Activated B cell treated with CpG ODN at 0.5 μM for 24 hours (primary cell): ENCODE measurements at regions of chr12 and their contacts with region 1.

Region 1: GRCh38 chr12:116703214-116703795 is 34.6 kb downstream of the SPRING1 start:
- DNase-seq: peak; percentile 42
- ATAC-seq: peak; percentile 66
- H3K4me3 Mint-ChIP-seq: no peak overlapping the region
- H3K27ac Mint-ChIP-seq: no peak overlapping the region
- H3K4me1 Mint-ChIP-seq: peaks cover 11% of the 10 kb centered on the region
- H3K27me3 Mint-ChIP-seq: peaks cover 4% of the 10 kb centered on the region
- CTCF ChIP-seq: peak; percentile 65

Region 2: DNA sequence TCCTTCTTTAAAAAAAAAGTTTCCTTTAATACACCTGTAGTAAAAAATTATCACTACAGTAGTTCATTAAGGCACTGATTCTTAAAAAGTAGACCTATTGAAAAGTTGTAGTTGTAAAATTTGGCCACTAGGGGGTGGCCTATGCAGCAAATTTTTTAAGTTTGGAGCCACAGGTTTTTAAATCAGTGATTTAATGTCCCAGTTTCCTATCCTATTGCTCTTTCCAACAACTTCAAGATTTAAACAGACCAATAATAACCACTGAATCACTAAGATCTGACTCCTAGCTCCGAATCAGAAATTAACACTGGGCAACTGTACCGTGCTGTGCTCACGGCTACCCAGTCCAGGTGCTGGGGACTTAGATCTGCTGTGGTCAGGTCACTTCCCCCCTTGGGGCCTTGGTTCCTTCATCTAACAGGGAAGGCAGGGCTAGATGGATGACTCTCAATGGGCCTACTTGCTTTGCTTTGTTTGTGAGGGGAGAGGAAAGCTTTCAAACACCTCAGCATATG is 705.1 kb before region 1 on chr12:
- CTCF ChIA-PET with region 1: interaction called, 45 read pairs
- POLR2A ChIA-PET with region 1: no interaction called
- intact Hi-C with region 1: no loop called
- DNase-seq: no peak
- ATAC-seq: peak; percentile 90
- H3K4me3 Mint-ChIP-seq: no peak overlapping the region
- H3K27ac Mint-ChIP-seq: peak overlapping the region; percentile 78
- H3K4me1 Mint-ChIP-seq: peaks cover 10% of the 10 kb centered on the region
- H3K27me3 Mint-ChIP-seq: no peaks in the 10 kb centered on the region
- CTCF ChIP-seq: peak; percentile 57

Region 3: GRCh38 chr12:116880817-116881324 is 177.6 kb after region 1 on chr12:
- CTCF ChIA-PET with region 1: interaction called, 26 read pairs
- POLR2A ChIA-PET with region 1: no interaction called
- intact Hi-C with region 1: loop called (anchors 1 kb)
- DNase-seq: peak; percentile 53
- ATAC-seq: peak; percentile 80
- H3K4me3 Mint-ChIP-seq: peak overlapping the region; percentile 85
- H3K27ac Mint-ChIP-seq: peak overlapping the region; percentile 77
- H3K4me1 Mint-ChIP-seq: peaks cover 45% of the 10 kb centered on the region
- H3K27me3 Mint-ChIP-seq: peaks cover 35% of the 10 kb centered on the region
- CTCF ChIP-seq: no peak

Region 4: GRCh38 chr12:116959845-116960514 is 256.7 kb after region 1 on chr12:
- CTCF ChIA-PET with region 1: interaction called, 4 read pairs
- POLR2A ChIA-PET with region 1: no interaction called
- intact Hi-C with region 1: loop called (anchors 5 kb)
- DNase-seq: no peak
- ATAC-seq: peak; percentile 70
- H3K4me3 Mint-ChIP-seq: no peak overlapping the region
- H3K27ac Mint-ChIP-seq: no peak overlapping the region
- H3K4me1 Mint-ChIP-seq: peaks cover 27% of the 10 kb centered on the region
- H3K27me3 Mint-ChIP-seq: no peaks in the 10 kb centered on the region
- CTCF ChIP-seq: no peak

Region 5: GRCh38 chr12:117119592-117120198 is 416.4 kb after region 1 on chr12:
- CTCF ChIA-PET with region 1: interaction called, 7 read pairs
- POLR2A ChIA-PET with region 1: interaction called, 3 read pairs
- intact Hi-C with region 1: loop called (anchors 1 kb)
- DNase-seq: no peak
- ATAC-seq: peak; percentile 21
- H3K4me3 Mint-ChIP-seq: no peak overlapping the region
- H3K27ac Mint-ChIP-seq: no peak overlapping the region
- H3K4me1 Mint-ChIP-seq: no peaks in the 10 kb centered on the region
- H3K27me3 Mint-ChIP-seq: no peaks in the 10 kb centered on the region
- CTCF ChIP-seq: no peak

Region 6: DNA sequence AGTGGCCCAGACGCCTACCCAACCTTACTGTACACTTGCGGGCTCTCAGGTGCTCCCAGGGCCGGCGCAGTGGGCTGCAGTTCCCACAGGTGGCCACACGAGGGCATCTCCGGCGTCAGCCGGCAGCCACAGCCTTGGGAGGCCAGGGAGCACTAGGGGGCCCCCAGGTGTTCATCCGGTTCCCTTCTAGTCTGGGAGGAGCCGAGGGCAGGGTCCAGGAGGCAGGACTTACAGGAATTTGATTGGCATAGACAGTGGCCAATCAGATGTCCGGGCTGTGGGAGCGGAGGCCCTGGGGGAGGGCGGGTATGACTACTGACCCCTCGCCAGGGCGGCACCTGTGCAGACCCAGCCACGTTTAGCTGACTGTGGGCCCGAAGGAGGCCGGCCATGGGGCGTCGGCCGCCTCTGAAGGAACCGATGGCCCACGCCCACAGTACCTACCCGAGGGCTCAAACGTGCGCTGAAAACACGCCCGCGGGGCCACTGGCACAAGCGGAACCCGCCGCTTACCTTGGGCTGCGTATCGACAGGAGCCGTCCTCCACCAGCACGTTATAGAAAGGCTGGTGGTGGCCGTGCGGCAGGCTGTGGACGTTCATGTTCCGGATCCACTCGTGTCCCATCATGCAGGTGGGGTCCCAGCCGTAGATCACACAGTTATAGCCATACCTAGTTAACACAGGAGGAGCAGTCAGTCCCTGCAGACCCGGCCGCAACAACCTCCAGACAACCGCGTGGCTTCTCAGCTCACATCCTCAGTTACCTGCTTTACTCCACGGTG is 452.2 kb after region 1 on chr12:
- CTCF ChIA-PET with region 1: no interaction called
- POLR2A ChIA-PET with region 1: no interaction called
- intact Hi-C with region 1: loop called (anchors 1 kb)
- DNase-seq: peak; percentile 57
- ATAC-seq: peak; percentile 86
- H3K4me3 Mint-ChIP-seq: no peak overlapping the region
- H3K27ac Mint-ChIP-seq: no peak overlapping the region
- H3K4me1 Mint-ChIP-seq: peaks cover 15% of the 10 kb centered on the region
- H3K27me3 Mint-ChIP-seq: no peaks in the 10 kb centered on the region
- CTCF ChIP-seq: peak; percentile 68